Activated naive CD8-positive, alpha-beta T cell treated with anti-CD3 and anti-CD28 coated beads, Interleukin-2, amount 10 ng/mL, durations not matched to agents 7 days and 5 days (primary cell): ENCODE measurements at regions of chr10 and their contacts with region 1.

Region 1: GRCh38 chr10:16891375-16892313 is 74.4 kb upstream of the RSU1 start:
- DNase-seq: peak; percentile 49
- ATAC-seq: peak; percentile 90
- H3K4me3 Mint-ChIP-seq: peak overlapping the region; percentile 82
- H3K27ac Mint-ChIP-seq: peak overlapping the region; percentile 72
- H3K4me1 Mint-ChIP-seq: peaks cover 13% of the 10 kb centered on the region
- H3K27me3 Mint-ChIP-seq: no peaks in the 10 kb centered on the region

Region 2: DNA sequence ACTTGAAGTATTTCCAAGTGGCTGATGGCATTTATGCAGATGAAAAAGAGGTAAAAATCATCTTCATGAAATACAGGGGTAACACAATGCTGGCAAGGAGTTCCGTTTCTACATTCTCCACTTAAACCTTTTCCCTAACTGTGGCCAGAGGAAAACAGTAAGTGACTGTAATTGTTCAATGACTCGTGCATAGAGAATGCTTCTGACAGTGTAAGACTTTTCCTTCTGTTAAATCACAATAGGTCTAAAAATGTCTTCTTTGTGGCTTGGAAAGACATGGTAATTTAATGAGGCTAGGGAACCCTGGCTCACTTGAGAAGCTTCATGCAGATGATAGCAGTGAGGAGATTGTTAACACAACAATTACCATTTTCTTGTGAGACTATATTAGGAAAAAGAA is 24.1 kb before region 1 on chr10:
- POLR2A ChIA-PET with region 1: no interaction called
- DNase-seq: no peak
- ATAC-seq: no peak
- H3K4me3 Mint-ChIP-seq: no peak overlapping the region
- H3K27ac Mint-ChIP-seq: no peak overlapping the region
- H3K4me1 Mint-ChIP-seq: no peaks in the 10 kb centered on the region
- H3K27me3 Mint-ChIP-seq: no peaks in the 10 kb centered on the region

Region 3: DNA sequence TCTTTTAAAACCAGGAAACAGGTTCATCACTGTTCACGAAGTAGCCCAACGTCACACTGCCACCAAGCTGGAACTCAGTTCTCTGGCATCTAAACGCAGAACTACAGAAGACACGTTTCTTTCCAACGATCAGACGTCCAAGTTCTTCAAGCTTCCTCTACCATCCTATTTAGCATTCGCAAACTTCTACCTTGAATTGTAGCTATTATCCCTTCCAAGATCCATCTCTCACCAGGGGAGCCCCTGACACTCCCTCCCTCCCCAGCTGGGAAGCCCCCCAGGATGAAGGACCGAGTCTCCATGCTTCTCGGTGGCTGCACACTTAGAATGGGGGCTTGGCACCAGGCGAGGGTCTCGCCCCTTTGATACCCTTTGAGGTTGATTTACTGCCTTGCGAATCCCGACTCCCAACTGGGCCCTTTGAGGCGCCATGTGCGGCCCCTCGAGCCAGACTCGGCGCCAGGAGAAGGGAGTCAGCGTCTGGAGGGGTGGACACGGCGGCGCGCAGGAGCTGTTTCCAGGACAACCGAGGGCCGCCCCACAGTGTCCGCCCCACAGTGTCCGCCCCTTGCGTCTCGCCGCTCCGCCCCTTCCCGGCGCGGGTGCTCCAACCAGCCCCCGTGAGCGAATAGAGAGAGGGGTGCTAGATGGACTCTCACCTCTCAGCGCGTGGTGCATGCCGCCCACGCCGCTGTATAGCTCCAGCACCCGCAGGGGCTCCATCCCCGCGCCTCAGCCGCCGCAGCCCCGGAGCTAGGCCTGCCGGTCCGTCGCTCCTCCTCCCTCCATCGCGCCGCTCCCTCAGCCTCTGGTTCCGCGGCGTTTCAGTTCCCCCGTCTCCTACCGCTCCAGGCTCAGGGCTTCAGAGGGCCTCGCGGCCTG is 309.5 kb after region 1 on chr10 and contains the start of gene TRDMT1:
- POLR2A ChIA-PET with region 1: interaction called, 14 read pairs
- DNase-seq: peak; percentile 86
- ATAC-seq: peak; percentile 93
- H3K4me3 Mint-ChIP-seq: peak within 1 kb of the TSS; percentile 91
- H3K27ac Mint-ChIP-seq: peak within 1 kb of the TSS; percentile 84
- H3K4me1 Mint-ChIP-seq: peaks cover 44% of the 10 kb centered on the region
- H3K27me3 Mint-ChIP-seq: no peaks in the 10 kb centered on the region
- total RNA-seq, gene TRDMT1: 15.3 to 17.1 TPM